Activated naive CD4-positive, alpha-beta T cell treated with anti-CD3 and anti-CD28 coated beads for 36 hours (primary cell): ENCODE measurements at regions of chr1 and their contacts with region 1.

Region 1: GRCh38 chr1:35287807-35288640 is 19.5 kb downstream of the ZMYM4 start:
- DNase-seq: peak; percentile 34
- H3K4me3 Mint-ChIP-seq: no peak overlapping the region
- H3K27ac Mint-ChIP-seq: no peak overlapping the region
- H3K4me1 Mint-ChIP-seq: peaks cover 36% of the 10 kb centered on the region
- H3K27me3 Mint-ChIP-seq: no peaks in the 10 kb centered on the region

Region 2: GRCh38 chr1:35544978-35545377 is 257.0 kb after region 1 on chr1:
- CTCF ChIA-PET with region 1: no interaction called
- intact Hi-C with region 1: loop called (anchors 1 kb)
- DNase-seq: peak; percentile 74
- H3K4me3 Mint-ChIP-seq: no peak overlapping the region
- H3K27ac Mint-ChIP-seq: no peak overlapping the region
- H3K4me1 Mint-ChIP-seq: peaks cover 52% of the 10 kb centered on the region
- H3K27me3 Mint-ChIP-seq: no peaks in the 10 kb centered on the region